ENCODE measurements at regions of chr2 and their contacts with region 1.

Region 1: GRCh38 chr2:218381916-218382366 is at the start of gene SLC11A1:
- DNase-seq: no peak
- H3K4me3 ChIP-seq: peak within 1 kb of the TSS in 1 of 7 experiments; percentile 51
- H3K27ac ChIP-seq: no peak within 1 kb of the TSS
- H3K4me1 ChIP-seq: peaks cover 0 to 4% (median 1%) of the 10 kb centered on the region in 4 experiments
- H3K27me3 ChIP-seq: no peaks in the 10 kb centered on the region

Region 2: GRCh38 chr2:218322895-218323808 is 58.8 kb before region 1 on chr2:
- CTCF ChIA-PET with region 1: no interaction called
- POLR2A ChIA-PET with region 1: no interaction called
- DNase-seq: peak; percentile 86 to 93 (median 89)
- H3K4me3 ChIP-seq: peak overlapping the region; percentile 45 to 97 (median 86)
- H3K27ac ChIP-seq: peak overlapping the region; percentile 64 to 84
- H3K4me1 ChIP-seq: peaks cover 7 to 84% (median 76%) of the 10 kb centered on the region in 4 experiments
- H3K27me3 ChIP-seq: no peaks in the 10 kb centered on the region

Region 3: GRCh38 chr2:218367415-218368153 is 14.4 kb before region 1 on chr2:
- CTCF ChIA-PET with region 1: interaction called, 21 read pairs
- POLR2A ChIA-PET with region 1: interaction called, 3 read pairs
- DNase-seq: peak; percentile 87 to 95 (median 92)
- H3K4me3 ChIP-seq: peak overlapping the region; percentile 45 to 84 (median 63)
- H3K27ac ChIP-seq: peak overlapping the region; percentile 81 to 93
- H3K4me1 ChIP-seq: peaks cover 14 to 48% (median 28%) of the 10 kb centered on the region in 4 experiments
- H3K27me3 ChIP-seq: no peaks in the 10 kb centered on the region